Endothelial cell of umbilical vein (primary cell): ENCODE measurements at regions of chr10 and their contacts with region 1.

Region 1: DNA sequence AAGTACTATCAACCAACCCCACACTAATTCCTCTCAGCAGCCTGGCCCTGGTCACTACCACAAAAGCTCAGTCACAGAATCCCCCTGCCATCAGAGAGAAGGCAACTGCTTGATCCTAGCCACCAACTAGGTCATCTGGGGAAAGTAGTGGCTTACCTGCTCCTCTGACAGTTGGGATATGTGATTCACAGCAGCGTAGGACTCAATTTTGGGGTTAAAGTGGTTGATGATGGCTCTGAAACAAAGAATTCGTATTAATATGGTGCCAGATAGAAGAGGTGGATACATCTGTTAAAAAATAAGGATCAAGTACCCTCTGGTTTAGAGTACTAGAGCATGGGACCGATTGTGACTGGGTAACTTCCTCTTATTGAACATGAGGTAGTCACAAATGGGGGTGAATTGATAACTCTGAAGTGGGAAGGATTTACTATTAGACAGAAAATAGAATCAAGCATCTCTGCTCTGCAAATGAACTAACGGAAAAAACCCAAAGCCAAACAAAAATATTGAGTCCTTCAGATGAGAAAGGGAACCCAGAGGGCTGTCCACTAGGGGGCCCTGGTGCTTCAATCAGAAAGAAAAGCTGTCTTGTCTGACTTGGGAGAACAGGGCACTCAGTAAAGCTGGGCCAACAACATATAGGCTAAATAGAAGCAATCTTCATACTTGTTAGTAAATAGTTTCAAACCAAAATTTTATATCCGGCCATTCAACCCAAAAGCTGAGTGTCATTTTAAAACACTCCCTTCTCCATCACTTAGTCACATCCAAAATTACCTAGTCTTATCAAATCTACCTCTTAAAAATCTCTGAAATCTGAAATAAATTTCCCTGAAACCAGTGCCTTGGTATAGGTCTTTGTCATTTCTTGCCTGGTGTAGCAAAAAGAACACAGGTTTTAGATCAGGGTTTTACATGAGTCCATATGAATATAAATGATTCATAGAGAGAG is 45.9 kb upstream of the KCNIP2 start:
- DNase-seq: peak; percentile 81
- H3K4me3 ChIP-seq: no peak overlapping the region
- H3K27ac ChIP-seq: no peak overlapping the region
- H3K4me1 ChIP-seq: no peaks in the 10 kb centered on the region
- H3K27me3 ChIP-seq: no peaks in the 10 kb centered on the region
- CTCF ChIP-seq: peak; percentile 81 to 84
- POLR2A ChIP-seq: no peak

Region 2: DNA sequence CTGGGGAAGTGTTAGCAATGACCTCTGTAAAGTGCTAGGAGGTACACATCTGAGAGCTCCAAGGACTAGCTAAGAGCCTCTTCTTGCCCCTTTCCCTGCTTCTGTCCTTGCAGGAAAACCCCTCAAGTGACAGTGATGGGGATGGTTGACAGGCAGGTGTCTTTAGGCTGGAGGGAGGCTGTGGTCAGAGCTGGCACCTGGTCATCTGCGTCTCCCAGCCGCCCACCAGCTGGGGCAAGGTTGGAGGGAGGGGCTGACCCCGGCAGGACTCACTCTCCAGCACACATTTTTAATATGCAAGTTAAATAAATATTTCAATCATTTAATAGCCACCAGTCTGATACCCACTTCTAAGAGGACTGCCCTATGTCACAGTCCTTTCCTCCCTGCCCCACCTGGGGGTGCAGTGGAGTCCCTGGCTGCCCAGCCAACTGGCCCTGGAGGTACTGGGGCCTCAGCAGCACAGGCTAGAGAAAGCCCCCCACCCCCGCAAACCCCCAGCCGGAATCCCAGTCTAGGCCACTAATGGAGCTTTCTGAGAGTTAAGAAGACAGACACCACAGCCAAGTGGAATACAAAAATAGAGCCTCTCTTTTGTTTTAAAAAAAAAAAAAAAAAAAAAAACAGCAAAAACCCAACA is 119.9 kb before region 1 on chr10:
- CTCF ChIA-PET with region 1: no interaction called
- POLR2A ChIA-PET with region 1: no interaction called
- dilution Hi-C with region 1: no loop called
- intact Hi-C with region 1: no loop called
- DNase-seq: no peak
- H3K4me3 ChIP-seq: no peak overlapping the region
- H3K27ac ChIP-seq: no peak overlapping the region
- H3K4me1 ChIP-seq: no peaks in the 10 kb centered on the region
- H3K27me3 ChIP-seq: peaks cover 74% of the 10 kb centered on the region in 2 experiments
- CTCF ChIP-seq: no peak
- POLR2A ChIP-seq: no peak

Region 3: DNA sequence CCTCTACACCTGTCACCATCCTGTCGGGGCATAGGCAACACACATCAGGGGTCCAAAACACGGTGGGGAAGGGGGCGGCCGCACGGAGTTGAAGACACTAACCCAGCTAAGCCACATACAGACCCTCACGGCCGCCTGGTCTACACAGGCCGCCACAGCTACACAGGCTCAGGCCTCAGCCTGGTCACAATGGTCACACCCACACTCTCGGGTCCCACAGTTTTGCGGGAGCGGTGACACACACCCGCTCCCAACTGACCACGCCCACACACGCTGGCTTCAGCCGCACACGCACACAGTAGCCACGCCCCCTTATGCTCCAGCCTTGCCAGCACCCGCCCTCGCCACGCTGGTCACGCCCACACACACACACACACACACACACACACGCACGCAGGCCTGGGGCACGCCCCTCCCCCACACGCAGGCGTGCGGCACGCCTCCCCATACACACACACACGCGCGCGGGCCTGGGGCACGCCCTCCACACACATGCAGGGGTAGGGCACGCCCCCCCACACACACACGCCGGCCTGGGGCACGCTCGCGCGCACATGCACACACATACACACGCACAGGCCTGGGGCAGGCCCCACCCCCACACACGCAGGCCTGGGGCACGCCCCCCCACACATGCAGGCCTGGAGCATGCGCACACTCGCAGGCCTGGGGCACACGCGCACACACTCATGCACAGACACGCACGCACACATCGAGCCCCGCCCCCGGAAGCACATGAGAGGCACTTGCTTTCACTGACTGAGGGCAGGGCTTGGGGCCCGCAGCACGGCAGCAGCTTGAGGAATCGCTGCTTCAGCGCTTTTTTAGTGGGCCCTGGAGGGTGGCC is 59.0 kb before region 1 on chr10:
- CTCF ChIA-PET with region 1: interaction called, 10 read pairs
- POLR2A ChIA-PET with region 1: no interaction called
- dilution Hi-C with region 1: no loop called
- intact Hi-C with region 1: no loop called
- DNase-seq: peak; percentile 91
- H3K4me3 ChIP-seq: peak overlapping the region in 2 of 3 experiments; percentile 25 to 64
- H3K27ac ChIP-seq: no peak overlapping the region
- H3K4me1 ChIP-seq: peaks cover 11% of the 10 kb centered on the region
- H3K27me3 ChIP-seq: no peaks in the 10 kb centered on the region
- CTCF ChIP-seq: no peak
- POLR2A ChIP-seq: no peak

Region 4: GRCh38 chr10:101858723-101859500 is 30.6 kb before region 1 on chr10:
- CTCF ChIA-PET with region 1: interaction called, 10 read pairs
- POLR2A ChIA-PET with region 1: no interaction called
- dilution Hi-C with region 1: no loop called
- intact Hi-C with region 1: no loop called
- DNase-seq: no peak
- H3K4me3 ChIP-seq: no peak overlapping the region
- H3K27ac ChIP-seq: no peak overlapping the region
- H3K4me1 ChIP-seq: peaks cover 12% of the 10 kb centered on the region
- H3K27me3 ChIP-seq: no peaks in the 10 kb centered on the region
- CTCF ChIP-seq: no peak
- POLR2A ChIP-seq: no peak

Region 5: DNA sequence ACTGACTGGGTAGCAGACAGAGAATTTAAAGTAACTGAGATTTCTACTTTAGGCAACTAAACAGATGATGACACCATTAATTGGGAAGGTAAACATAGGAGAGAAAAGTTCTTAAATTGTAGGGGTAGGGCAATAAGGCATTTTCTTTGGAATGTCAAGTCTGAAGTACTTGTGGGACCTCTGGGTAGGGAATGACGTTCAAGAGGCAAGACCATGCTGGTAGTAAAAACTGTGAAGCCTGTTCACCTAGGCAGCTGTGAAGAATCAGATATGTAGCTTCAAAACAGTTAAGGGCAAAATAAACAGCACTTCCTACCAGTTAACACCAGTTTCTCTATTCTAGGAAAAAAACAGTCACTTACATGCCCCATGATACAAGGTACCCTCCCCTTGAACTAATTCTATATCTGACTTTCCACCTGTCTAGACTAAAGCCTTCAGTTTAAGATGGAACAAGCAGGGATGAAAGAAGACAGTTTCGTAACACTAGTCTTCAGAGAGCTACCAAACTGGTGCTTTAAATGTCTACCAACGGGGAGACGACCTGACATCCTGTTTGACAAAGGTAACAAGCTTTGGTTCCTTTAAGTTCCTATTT is 17.2 kb after region 1 on chr10:
- CTCF ChIA-PET with region 1: interaction called, 12 read pairs
- POLR2A ChIA-PET with region 1: no interaction called
- dilution Hi-C with region 1: no loop called
- intact Hi-C with region 1: no loop called
- DNase-seq: no peak
- H3K4me3 ChIP-seq: no peak overlapping the region
- H3K27ac ChIP-seq: no peak overlapping the region
- H3K4me1 ChIP-seq: no peaks in the 10 kb centered on the region
- H3K27me3 ChIP-seq: no peaks in the 10 kb centered on the region
- CTCF ChIP-seq: no peak
- POLR2A ChIP-seq: no peak

Region 6: DNA sequence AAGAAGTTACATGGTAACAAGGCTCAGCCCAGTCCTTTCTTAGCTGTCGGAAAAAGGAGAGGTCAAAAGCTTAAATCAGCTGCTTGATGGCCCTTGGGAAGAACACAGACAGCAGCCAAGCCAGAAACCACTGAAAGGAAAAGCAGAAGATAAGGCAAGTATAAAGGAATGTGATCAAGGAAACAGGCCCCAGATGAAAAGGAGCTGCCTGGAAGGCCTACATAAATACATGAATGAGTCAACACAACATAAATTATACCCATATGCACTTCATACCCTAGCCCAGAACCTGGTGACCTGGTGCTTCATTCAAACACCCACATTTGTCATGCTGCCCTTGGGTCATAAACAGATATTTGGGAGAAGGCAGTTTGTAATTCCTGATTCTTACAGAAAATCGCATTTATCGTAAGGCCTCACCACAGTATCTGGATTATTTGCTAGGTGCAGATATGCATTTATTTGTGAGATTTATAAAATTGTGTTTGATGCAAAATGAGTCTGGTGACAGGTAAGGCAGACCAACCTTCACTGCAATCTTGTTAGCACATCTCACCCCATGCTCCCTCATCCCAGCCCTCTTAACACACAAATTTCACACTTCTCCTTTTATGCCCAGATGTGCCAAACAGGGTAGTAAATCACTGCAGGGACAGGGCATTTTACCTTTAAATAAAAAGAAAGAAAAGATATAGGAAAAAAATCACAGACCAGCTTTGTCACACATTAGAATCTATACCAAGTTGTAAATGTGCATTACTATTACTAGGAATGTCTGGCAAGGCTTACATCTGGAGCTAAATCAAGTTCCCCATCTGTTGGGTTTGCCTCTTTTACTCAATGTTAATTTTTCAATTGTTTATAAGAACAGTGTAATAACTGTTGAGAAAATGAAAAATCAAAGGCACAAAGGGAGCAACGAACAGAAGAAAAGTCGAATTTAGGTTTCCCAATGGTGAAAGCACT is 49.1 kb after region 1 on chr10:
- CTCF ChIA-PET with region 1: interaction called, 22 read pairs
- POLR2A ChIA-PET with region 1: no interaction called
- dilution Hi-C with region 1: no loop called
- intact Hi-C with region 1: loop called (anchors 5 kb)
- DNase-seq: peak; percentile 97
- H3K4me3 ChIP-seq: no peak overlapping the region
- H3K27ac ChIP-seq: peak overlapping the region; percentile 92
- H3K4me1 ChIP-seq: peaks cover 49% of the 10 kb centered on the region
- H3K27me3 ChIP-seq: no peaks in the 10 kb centered on the region
- CTCF ChIP-seq: no peak
- POLR2A ChIP-seq: peak; percentile 53

Region 7: GRCh38 chr10:101974091-101974971 is 84.8 kb after region 1 on chr10:
- CTCF ChIA-PET with region 1: interaction called, 13 read pairs
- POLR2A ChIA-PET with region 1: no interaction called
- dilution Hi-C with region 1: loop called (anchors 25 kb)
- intact Hi-C with region 1: no loop called
- DNase-seq: peak; percentile 29
- H3K4me3 ChIP-seq: peak overlapping the region in 1 of 3 experiments; percentile 5
- H3K27ac ChIP-seq: peak overlapping the region; percentile 25
- H3K4me1 ChIP-seq: peaks cover 16% of the 10 kb centered on the region
- H3K27me3 ChIP-seq: no peaks in the 10 kb centered on the region
- CTCF ChIP-seq: no peak
- POLR2A ChIP-seq: no peak

Region 8: GRCh38 chr10:102001435-102002068 is 112.0 kb after region 1 on chr10:
- CTCF ChIA-PET with region 1: interaction called, 559 read pairs
- POLR2A ChIA-PET with region 1: no interaction called
- dilution Hi-C with region 1: loop called (anchors 25 kb)
- intact Hi-C with region 1: no loop called
- DNase-seq: no peak
- H3K4me3 ChIP-seq: no peak overlapping the region
- H3K27ac ChIP-seq: no peak overlapping the region
- H3K4me1 ChIP-seq: no peaks in the 10 kb centered on the region
- H3K27me3 ChIP-seq: no peaks in the 10 kb centered on the region
- CTCF ChIP-seq: no peak
- POLR2A ChIP-seq: no peak

Region 9: GRCh38 chr10:102195296-102195870 is 305.9 kb after region 1 on chr10:
- CTCF ChIA-PET with region 1: no interaction called
- POLR2A ChIA-PET with region 1: no interaction called
- dilution Hi-C with region 1: no loop called
- intact Hi-C with region 1: no loop called
- DNase-seq: no peak
- H3K4me3 ChIP-seq: no peak overlapping the region
- H3K27ac ChIP-seq: no peak overlapping the region
- H3K4me1 ChIP-seq: no peaks in the 10 kb centered on the region
- H3K27me3 ChIP-seq: peaks cover 5 to 13% of the 10 kb centered on the region in 2 experiments
- CTCF ChIP-seq: no peak
- POLR2A ChIP-seq: no peak